Activated T-helper 2 cell treated with anti-CD3 and anti-CD28 coated beads, Interferon-gamma antibody, Interleukin-2, Interleukin-4, amounts not matched to agents 10 μg/mL and 5 μg/mL and 100 μg/mL, durations not matched to agents 14 hours and 24 hours and 36 hours (primary cell): ENCODE measurements at regions of chr11 and their contacts with region 1.

Region 1: GRCh38 chr11:96342961-96343711 is at the start of gene MAML2:
- DNase-seq: peak; percentile 83
- H3K4me3 Mint-ChIP-seq: peak within 1 kb of the TSS; percentile 97
- H3K27ac Mint-ChIP-seq: peak within 1 kb of the TSS; percentile 92
- H3K4me1 Mint-ChIP-seq: peaks cover 31% of the 10 kb centered on the region
- H3K27me3 Mint-ChIP-seq: no peaks in the 10 kb centered on the region
- total RNA-seq, gene MAML2: 10.5 and 11.8 TPM in 2 replicates

Region 2: DNA sequence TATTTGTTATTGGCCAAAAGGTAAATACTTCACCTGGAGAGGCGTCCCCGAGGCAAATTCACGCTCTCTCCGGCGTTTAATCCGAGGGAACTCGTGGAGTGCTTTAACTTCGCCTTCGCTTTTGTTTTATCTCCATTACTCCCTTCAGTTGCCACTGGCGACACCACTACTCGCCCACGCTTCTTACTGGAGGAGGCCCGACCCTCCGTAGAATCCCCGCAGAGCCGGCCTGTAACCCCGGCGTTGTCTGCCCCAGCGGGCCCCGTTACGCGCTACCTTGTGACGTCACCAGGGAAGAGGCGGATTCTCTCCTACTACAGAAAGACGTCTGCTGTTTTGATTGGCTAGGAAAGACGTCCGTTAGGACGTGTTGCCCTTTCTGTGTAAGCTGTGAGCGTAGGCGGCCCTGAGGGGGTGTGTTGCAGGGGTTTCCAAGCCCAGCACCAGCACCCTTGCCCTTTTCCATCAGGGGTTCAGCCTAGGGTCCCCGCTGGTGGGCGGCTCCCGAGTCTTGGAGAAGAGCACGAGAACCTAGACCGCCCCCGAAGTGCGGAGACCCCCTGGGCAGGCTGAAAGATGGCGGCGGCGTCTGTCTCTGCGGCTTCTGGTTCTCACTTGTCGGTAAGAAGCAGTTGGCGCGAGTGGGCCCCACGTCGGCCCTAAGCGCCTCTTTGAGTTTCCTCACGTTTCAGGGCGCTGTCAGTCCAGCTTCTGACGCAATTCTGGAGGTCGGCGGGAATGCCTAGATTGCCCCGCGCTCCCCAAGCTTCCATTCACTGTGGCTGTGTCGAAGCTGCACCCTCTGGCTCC is 552.8 kb before region 1 on chr11 and contains the start of gene CEP57:
- intact Hi-C with region 1: loop called (anchors 2 kb)
- DNase-seq: peak; percentile 92
- H3K4me3 Mint-ChIP-seq: peak within 1 kb of the TSS; percentile 98
- H3K27ac Mint-ChIP-seq: peak within 1 kb of the TSS; percentile 100
- H3K4me1 Mint-ChIP-seq: peaks cover 52% of the 10 kb centered on the region
- H3K27me3 Mint-ChIP-seq: no peaks in the 10 kb centered on the region
- total RNA-seq, gene CEP57: 88.3 and 94.5 TPM in 2 replicates

Region 3: GRCh38 chr11:96062134-96062533 is 281.0 kb before region 1 on chr11:
- intact Hi-C with region 1: loop called (anchors 2 kb)
- DNase-seq: no peak
- H3K4me3 Mint-ChIP-seq: peak overlapping the region; percentile 34
- H3K27ac Mint-ChIP-seq: peak overlapping the region; percentile 92
- H3K4me1 Mint-ChIP-seq: peaks cover 53% of the 10 kb centered on the region
- H3K27me3 Mint-ChIP-seq: no peaks in the 10 kb centered on the region

Region 4: GRCh38 chr11:96207459-96208449 is 135.4 kb before region 1 on chr11:
- intact Hi-C with region 1: loop called (anchors 1 kb)
- DNase-seq: no peak
- H3K4me3 Mint-ChIP-seq: peak overlapping the region; percentile 48
- H3K27ac Mint-ChIP-seq: peak overlapping the region; percentile 85
- H3K4me1 Mint-ChIP-seq: peaks cover 76% of the 10 kb centered on the region
- H3K27me3 Mint-ChIP-seq: no peaks in the 10 kb centered on the region

Region 5: DNA sequence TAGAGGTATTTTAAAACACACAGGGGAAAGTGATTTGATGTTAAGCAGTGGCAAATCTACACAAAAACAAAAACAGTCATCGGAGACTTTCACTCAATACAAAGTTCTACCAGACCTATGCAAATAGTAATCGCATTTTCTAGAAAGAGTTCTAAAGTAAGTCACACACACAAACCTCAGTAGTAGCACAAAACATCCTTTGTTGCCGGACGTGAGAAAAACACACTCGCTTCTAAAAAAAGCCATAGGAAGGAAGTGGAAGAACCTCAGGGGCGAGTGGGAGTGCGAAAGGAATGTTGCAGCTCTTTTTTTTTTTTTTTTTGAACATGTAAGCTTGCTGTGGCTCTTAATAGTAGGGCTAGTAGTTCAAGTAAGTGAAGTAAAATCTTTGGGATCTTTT is 89.0 kb before region 1 on chr11:
- intact Hi-C with region 1: loop called (anchors 1 kb)
- DNase-seq: no peak
- H3K4me3 Mint-ChIP-seq: peak overlapping the region; percentile 70
- H3K27ac Mint-ChIP-seq: peak overlapping the region; percentile 83
- H3K4me1 Mint-ChIP-seq: peaks cover 76% of the 10 kb centered on the region
- H3K27me3 Mint-ChIP-seq: no peaks in the 10 kb centered on the region

Region 6: GRCh38 chr11:96317571-96317970 is 25.6 kb before region 1 on chr11:
- intact Hi-C with region 1: no loop called
- DNase-seq: no peak
- H3K4me3 Mint-ChIP-seq: no peak overlapping the region
- H3K27ac Mint-ChIP-seq: peak overlapping the region; percentile 36
- H3K4me1 Mint-ChIP-seq: peaks cover 51% of the 10 kb centered on the region
- H3K27me3 Mint-ChIP-seq: no peaks in the 10 kb centered on the region

Region 7: GRCh38 chr11:96389720-96390487 is 46.8 kb after region 1 on chr11 and contains the starts of genes CCDC82 and JRKL:
- intact Hi-C with region 1: loop called (anchors 2 kb)
- DNase-seq: peak; percentile 96
- H3K4me3 Mint-ChIP-seq: peak within 1 kb of the TSS; percentile 94
- H3K27ac Mint-ChIP-seq: peak within 1 kb of the TSS; percentile 86
- H3K4me1 Mint-ChIP-seq: peaks cover 50% of the 10 kb centered on the region
- H3K27me3 Mint-ChIP-seq: no peaks in the 10 kb centered on the region
- total RNA-seq, gene CCDC82: 35.4 and 38.6 TPM in 2 replicates
- total RNA-seq, gene JRKL: 11.8 and 12.9 TPM in 2 replicates